ENCODE measurements at regions of chr3 and their contacts with region 1.

Region 1: GRCh38 chr3:156151824-156152428 is 31.5 kb downstream of the KCNAB1 start:
- DNase-seq: peak; percentile 47 to 81 (median 75)
- ATAC-seq: peak; percentile 77 to 90 (median 82)
- H3K4me3 ChIP-seq: no peak overlapping the region
- H3K27ac ChIP-seq: peak overlapping the region; percentile 10 to 59 (median 36)
- H3K4me1 ChIP-seq: peaks cover 0 to 9% (median 0%) of the 10 kb centered on the region in 3 donors
- H3K27me3 ChIP-seq: no peaks in the 10 kb centered on the region
- CTCF ChIP-seq: peak; percentile 18 to 65 (median 46)

Region 2: DNA sequence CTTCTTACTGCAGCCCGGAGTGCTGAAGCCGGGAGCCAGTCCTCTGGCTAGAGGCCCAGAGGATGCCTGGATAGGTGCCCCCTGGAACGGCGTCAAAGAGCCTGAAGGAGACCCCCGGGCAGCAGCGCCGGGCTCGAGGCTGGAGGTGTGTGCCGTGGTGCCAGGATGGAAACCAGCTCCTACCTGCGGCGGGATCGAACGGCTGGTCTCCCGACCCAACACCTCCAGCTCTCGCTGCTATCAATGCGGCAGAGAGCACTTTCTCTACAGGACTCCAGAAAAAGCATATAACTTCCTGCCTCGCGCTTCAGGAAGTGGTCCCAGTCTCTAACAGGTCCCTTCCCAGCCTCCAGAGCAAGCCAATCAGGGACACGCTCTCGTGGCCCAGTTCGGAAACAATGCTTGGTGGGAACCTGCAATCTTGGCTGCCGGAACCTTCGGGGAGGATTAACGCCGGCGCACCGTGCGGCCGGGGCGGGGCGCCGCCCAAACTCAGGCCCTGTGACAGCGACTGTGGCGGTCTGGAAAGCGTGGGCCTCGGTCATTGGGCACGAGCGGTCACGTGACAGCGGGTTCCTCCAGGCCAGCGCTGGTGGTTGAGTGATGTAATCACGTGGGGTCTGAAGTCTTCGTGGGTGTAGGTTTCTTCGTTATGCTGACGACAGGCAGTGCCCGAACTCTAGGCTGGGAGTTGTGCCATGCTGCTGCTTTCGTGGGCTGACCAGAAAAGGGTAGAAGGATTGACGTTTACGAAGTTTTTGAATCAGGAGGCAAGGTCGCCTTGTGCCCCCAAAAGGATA is 297.6 kb before region 1 on chr3 and contains the start of gene SLC33A1:
- intact Hi-C with region 1: no loop called
- DNase-seq: peak; percentile 96 to 100 (median 99)
- ATAC-seq: peak; percentile 91 to 97 (median 94)
- H3K4me3 ChIP-seq: peak within 1 kb of the TSS; percentile 86 to 99 (median 93)
- H3K27ac ChIP-seq: peak within 1 kb of the TSS; percentile 91 to 97 (median 94)
- H3K4me1 ChIP-seq: peaks cover 0 to 14% (median 6%) of the 10 kb centered on the region in 3 donors
- H3K27me3 ChIP-seq: no peaks in the 10 kb centered on the region
- CTCF ChIP-seq: no peak
- total RNA-seq, gene SLC33A1: 30.2 to 39.1 (median 35.6) TPM

Region 3: GRCh38 chr3:156382458-156383346 is 230.8 kb after region 1 on chr3:
- intact Hi-C with region 1: loop called in 1 of 3 experiments (anchors 5 kb)
- DNase-seq: peak in 1 of 6 donors; percentile 11
- ATAC-seq: peak in 1 of 4 donors; percentile 54
- H3K4me3 ChIP-seq: no peak overlapping the region
- H3K27ac ChIP-seq: no peak overlapping the region
- H3K4me1 ChIP-seq: no peaks in the 10 kb centered on the region
- H3K27me3 ChIP-seq: no peaks in the 10 kb centered on the region
- CTCF ChIP-seq: peak in 3 of 4 donors; percentile 19 to 24 (median 22)

Region 4: GRCh38 chr3:156509189-156510174 is 357.6 kb after region 1 on chr3:
- intact Hi-C with region 1: loop called in 1 of 3 experiments (anchors 2 kb)
- DNase-seq: no peak
- ATAC-seq: peak; percentile 56 to 92 (median 89)
- H3K4me3 ChIP-seq: no peak overlapping the region
- H3K27ac ChIP-seq: no peak overlapping the region
- H3K4me1 ChIP-seq: no peaks in the 10 kb centered on the region
- H3K27me3 ChIP-seq: no peaks in the 10 kb centered on the region
- CTCF ChIP-seq: peak; percentile 34 to 55 (median 44)

Region 5: GRCh38 chr3:157081681-157082210 is 929.8 kb after region 1 on chr3:
- intact Hi-C with region 1: loop called in 1 of 3 experiments (anchors 10 kb)
- DNase-seq: peak; percentile 73 to 97 (median 90)
- ATAC-seq: peak; percentile 93 to 98 (median 95)
- H3K4me3 ChIP-seq: no peak overlapping the region
- H3K27ac ChIP-seq: no peak overlapping the region
- H3K4me1 ChIP-seq: peaks cover 4 to 10% (median 4%) of the 10 kb centered on the region in 3 donors
- H3K27me3 ChIP-seq: no peaks in the 10 kb centered on the region
- CTCF ChIP-seq: peak; percentile 83 to 95 (median 90)